Tibial artery (tissue), 4 donors: ENCODE measurements at regions of chr20 and their contacts with region 1.

Region 1: GRCh38 chr20:58179432-58180099 is 48.9 kb downstream of the ANKRD60 start:
- DNase-seq: peak; percentile 32 to 82
- H3K4me3 ChIP-seq: peak overlapping the region; percentile 33 to 50
- H3K27ac ChIP-seq: peak overlapping the region; percentile 55 to 81
- H3K4me1 ChIP-seq: peaks cover 0 to 51% (median 28%) of the 10 kb centered on the region in 4 donors
- H3K27me3 ChIP-seq: no peaks in the 10 kb centered on the region
- CTCF ChIP-seq: peak; percentile 99

Region 2: GRCh38 chr20:57654363-57654997 is 525.1 kb before region 1 on chr20:
- intact Hi-C with region 1: loop called (anchors 2 kb)
- DNase-seq: peak in 1 of 2 donors; percentile 78
- H3K4me3 ChIP-seq: no peak overlapping the region
- H3K27ac ChIP-seq: peak overlapping the region; percentile 10 to 71
- H3K4me1 ChIP-seq: peaks cover 0 to 43% (median 16%) of the 10 kb centered on the region in 4 donors
- H3K27me3 ChIP-seq: no peaks in the 10 kb centered on the region
- CTCF ChIP-seq: peak; percentile 90 to 96

Region 3: GRCh38 chr20:57718490-57719271 is 460.9 kb before region 1 on chr20:
- intact Hi-C with region 1: loop called (anchors 5 kb)
- DNase-seq: peak; percentile 98
- H3K4me3 ChIP-seq: peak overlapping the region; percentile 19 to 45
- H3K27ac ChIP-seq: peak overlapping the region; percentile 27 to 45
- H3K4me1 ChIP-seq: peaks cover 5 to 54% (median 44%) of the 10 kb centered on the region in 4 donors
- H3K27me3 ChIP-seq: no peaks in the 10 kb centered on the region
- CTCF ChIP-seq: no peak

Region 4: GRCh38 chr20:57748601-57749130 is 430.9 kb before region 1 on chr20:
- intact Hi-C with region 1: loop called (anchors 10 kb)
- DNase-seq: peak; percentile 88 to 98
- H3K4me3 ChIP-seq: peak overlapping the region; percentile 32 to 53
- H3K27ac ChIP-seq: peak overlapping the region; percentile 87 to 93
- H3K4me1 ChIP-seq: peaks cover 8 to 29% (median 26%) of the 10 kb centered on the region in 4 donors
- H3K27me3 ChIP-seq: no peaks in the 10 kb centered on the region
- CTCF ChIP-seq: peak in 1 of 2 experiments; percentile 23

Region 5: DNA sequence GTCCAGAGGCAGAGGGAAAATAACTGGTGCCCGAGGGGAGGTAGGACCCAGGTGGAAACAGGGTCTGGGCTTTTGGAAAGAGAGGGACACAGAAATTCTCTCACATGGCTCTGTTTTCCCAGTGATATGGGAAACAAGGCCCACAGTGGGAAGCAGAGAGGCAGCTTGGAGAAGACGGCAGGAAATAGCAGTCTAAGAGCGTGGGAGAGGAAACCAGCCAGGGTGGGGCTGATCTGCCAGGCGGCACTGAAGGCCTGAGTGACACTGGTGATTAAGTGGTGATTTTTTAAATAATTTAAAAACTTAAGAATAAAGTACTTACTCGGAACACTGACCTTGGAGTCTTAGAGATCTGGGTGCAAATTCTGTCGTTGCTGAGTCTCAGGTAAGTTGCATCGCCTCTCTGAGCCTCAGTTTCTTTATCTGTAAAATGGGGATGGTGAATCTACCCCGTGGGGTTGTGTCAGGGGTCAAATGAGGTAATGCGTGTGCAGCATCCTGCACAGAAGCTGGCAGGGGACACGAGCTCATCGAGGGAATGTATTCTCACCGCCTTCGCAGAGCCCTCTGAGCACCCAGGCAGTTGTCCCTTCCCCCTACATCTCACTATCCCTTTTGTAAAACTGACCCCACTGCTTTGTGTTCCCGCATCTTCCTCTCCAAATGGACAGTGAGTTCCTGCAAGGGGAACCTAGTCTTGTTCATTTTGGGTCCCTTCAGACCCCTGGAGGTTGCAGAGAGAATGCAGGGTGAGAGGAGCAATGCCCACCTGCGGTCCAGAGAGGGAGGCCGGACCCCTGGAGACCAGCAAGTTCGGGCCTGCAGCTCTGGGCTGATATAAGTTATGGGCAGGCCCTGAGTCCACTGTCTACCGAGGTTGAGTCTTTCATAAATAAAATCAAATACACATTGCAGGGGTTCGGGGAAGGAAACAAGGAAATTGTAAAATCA is 241.1 kb before region 1 on chr20:
- intact Hi-C with region 1: loop called (anchors 10 kb)
- DNase-seq: no peak
- H3K4me3 ChIP-seq: no peak overlapping the region
- H3K27ac ChIP-seq: peak overlapping the region; percentile 54 to 56
- H3K4me1 ChIP-seq: peaks cover 0 to 26% (median 12%) of the 10 kb centered on the region in 4 donors
- H3K27me3 ChIP-seq: no peaks in the 10 kb centered on the region
- CTCF ChIP-seq: no peak

Region 6: DNA sequence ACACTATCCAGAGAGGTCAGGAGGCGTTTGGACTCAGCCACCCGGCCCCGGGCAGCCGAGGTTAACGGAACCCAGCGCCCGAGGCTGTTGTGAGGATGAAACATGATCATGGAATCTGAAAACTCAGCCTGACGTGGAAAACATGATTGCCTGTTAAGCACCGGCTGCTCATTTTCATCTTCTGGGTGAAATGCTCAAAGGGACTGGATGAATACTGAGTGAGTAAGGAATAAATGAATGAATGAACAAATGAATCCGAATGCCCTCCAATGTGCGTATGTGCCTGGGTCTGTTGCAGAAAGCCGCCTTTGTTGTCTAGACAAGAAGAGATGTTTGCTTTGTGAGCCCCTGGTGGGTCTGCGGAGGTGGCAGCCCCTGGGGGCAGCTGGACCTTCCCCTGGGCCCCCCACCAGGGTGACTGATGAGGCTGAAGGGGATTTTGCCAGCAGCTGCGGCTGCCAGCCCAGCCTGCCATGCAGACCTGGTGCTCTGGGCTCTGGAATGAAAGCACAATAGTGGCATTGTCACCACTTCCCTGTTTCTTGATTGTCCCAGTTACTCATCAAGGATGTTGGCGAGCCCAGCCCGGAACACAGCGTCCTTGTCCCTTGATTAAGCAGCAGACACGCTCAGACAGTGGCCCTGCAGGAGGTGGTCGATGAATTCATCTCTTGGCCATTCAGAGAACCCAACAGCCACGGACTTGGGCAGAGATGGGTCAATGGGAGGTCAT is 162.2 kb before region 1 on chr20:
- intact Hi-C with region 1: loop called (anchors 10 kb)
- DNase-seq: peak in 1 of 2 donors; percentile 26
- H3K4me3 ChIP-seq: no peak overlapping the region
- H3K27ac ChIP-seq: peak overlapping the region in 1 of 2 donors; percentile 7
- H3K4me1 ChIP-seq: peaks cover 0 to 44% (median 29%) of the 10 kb centered on the region in 4 donors
- H3K27me3 ChIP-seq: no peaks in the 10 kb centered on the region
- CTCF ChIP-seq: no peak

Region 7: DNA sequence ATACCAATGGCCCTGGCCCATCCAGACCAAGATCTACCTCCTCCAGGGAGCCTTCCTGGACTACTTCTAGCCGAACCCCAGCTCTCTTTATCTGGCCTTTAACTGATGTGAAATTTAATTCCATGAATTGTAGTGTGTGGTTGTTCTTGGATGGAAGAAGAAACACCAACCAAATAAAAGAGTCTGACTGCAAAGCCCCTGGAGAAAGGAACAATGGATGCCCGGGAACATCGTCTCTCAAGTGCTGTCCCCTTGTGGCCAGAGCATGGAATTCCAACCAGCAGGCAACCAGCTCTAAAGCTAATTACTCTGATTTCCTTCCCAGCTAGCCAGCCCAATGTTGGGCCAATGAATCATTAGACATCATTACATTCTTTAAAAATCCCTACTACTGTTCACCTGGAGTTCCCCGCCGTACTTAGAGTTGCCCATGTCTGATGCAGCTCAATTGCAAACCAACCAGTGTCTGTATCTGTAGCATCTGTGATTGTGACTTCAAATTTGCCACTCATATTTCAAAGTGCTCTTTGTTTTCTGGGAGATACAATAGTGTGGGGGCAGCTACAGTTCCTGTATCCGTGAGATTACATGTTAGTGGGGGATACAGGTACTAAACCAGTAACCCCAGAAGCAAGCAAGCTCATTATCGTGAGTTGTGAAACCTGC is 92.2 kb before region 1 on chr20:
- intact Hi-C with region 1: loop called (anchors 5 kb)
- DNase-seq: peak in 1 of 2 donors; percentile 62
- H3K4me3 ChIP-seq: no peak overlapping the region
- H3K27ac ChIP-seq: no peak overlapping the region
- H3K4me1 ChIP-seq: peaks cover 0 to 2% (median 0%) of the 10 kb centered on the region in 4 donors
- H3K27me3 ChIP-seq: no peaks in the 10 kb centered on the region
- CTCF ChIP-seq: peak; percentile 83 to 85